Dendritic cell treated with granulocyte-macrophage colony-stimulating factor and Interleukin-4, amounts not matched to agents 40 ng/mL and 50 ng/mL, for 4 days (primary cell): ENCODE measurements at regions of chr22 and their contacts with region 1.

Region 1: DNA sequence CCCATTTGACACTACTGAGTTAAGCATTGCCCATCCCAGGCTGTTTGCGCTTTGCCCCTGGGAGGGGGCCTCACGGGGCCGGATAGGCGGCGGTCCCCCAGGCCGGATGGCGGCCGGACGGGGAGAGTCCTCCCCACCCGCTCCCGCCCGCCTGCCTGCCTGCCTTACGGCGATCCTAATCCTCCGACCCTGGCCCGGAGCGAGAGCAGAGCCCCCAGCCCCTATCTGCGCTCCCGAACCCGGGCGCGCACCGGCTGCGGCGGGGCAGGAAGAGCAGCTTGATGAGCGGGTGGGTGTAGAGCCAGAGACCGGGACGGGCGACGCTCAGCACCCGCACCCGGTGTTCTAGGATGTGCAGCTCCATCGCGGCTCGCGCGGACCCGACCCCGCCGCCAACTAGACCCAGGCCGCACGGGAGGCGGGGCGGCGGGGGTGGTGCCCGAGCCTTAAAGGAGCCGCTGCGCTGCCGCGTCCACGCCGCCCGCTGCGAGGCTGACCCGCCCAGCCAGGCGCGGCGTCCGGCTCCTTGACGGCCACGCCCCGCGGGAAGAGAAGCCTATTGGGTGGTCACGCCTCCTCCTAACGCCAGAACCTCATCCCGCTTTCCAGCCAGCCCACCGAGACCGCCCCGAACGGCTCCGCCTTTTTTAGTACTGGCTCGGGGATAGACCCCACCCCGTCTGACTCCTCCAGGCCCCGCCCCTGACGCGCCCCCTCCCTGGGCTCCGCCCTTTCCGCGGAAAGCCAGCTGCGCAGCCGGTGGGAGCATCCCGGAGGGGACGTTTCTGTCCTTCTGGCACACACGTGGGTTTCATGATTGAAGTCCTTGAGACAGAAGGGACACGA is at the start of gene CASTOR1:
- H3K4me3 Mint-ChIP-seq: peak within 1 kb of the TSS; percentile 79
- H3K27ac Mint-ChIP-seq: peak within 1 kb of the TSS; percentile 90
- H3K4me1 Mint-ChIP-seq: peaks cover 70% of the 10 kb centered on the region
- H3K27me3 Mint-ChIP-seq: peaks cover 2% of the 10 kb centered on the region

Region 2: GRCh38 chr22:30253205-30253852 is 36.0 kb before region 1 on chr22:
- intact Hi-C with region 1: loop called (anchors 5 kb)
- H3K4me3 Mint-ChIP-seq: no peak overlapping the region
- H3K27ac Mint-ChIP-seq: peak overlapping the region; percentile 24
- H3K4me1 Mint-ChIP-seq: peaks cover 48% of the 10 kb centered on the region
- H3K27me3 Mint-ChIP-seq: peaks cover 36% of the 10 kb centered on the region

Region 3: GRCh38 chr22:30305519-30305905 is 16.2 kb after region 1 on chr22:
- intact Hi-C with region 1: loop called (anchors 1 kb)
- H3K4me3 Mint-ChIP-seq: peak overlapping the region; percentile 52
- H3K27ac Mint-ChIP-seq: peak overlapping the region; percentile 85
- H3K4me1 Mint-ChIP-seq: peaks cover 100% of the 10 kb centered on the region
- H3K27me3 Mint-ChIP-seq: no peaks in the 10 kb centered on the region

Region 4: GRCh38 chr22:30318799-30319419 is 29.6 kb after region 1 on chr22:
- intact Hi-C with region 1: no loop called
- H3K4me3 Mint-ChIP-seq: no peak overlapping the region
- H3K27ac Mint-ChIP-seq: peak overlapping the region; percentile 48
- H3K4me1 Mint-ChIP-seq: peaks cover 93% of the 10 kb centered on the region
- H3K27me3 Mint-ChIP-seq: no peaks in the 10 kb centered on the region

Region 5: GRCh38 chr22:30356449-30357235 is 67.3 kb after region 1 on chr22 and contains the starts of genes CCDC157 and SF3A1:
- intact Hi-C with region 1: loop called (anchors 1 kb)
- H3K4me3 Mint-ChIP-seq: peak within 1 kb of the TSS; percentile 73
- H3K27ac Mint-ChIP-seq: peak within 1 kb of the TSS; percentile 67
- H3K4me1 Mint-ChIP-seq: peaks cover 46% of the 10 kb centered on the region
- H3K27me3 Mint-ChIP-seq: peaks cover 9% of the 10 kb centered on the region

Region 6: DNA sequence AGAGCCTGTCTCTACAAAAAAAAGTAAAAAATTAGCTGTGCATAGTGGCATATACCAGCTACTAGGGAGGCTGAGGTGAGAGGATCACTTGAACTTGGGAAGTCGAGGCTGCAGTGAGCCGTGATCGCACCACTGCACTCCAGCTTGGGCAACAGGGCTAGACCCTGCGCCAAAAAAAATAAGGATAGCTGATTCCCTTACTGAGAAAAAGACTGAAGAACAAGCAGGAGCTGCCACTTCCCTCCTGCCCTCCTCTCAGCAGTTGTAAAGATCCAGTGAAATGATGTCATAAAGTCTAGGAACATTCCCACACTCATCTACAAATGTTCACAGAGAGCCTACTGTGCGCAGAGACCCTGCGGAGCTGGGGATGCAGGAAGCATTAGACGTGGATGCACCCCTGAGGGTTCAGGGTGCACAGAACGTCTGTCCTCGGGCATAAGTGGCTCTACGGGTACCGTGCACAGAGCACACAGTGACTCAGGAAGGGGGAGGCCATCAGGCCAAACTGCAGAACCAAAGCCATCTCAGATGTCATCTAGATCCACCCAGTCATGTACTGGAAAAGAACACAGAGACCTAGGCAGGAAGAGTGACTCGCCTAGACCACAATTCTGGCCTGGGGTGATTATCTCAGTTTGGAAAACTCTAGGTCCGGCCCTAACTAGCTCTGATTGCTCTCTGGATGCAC is 119.2 kb after region 1 on chr22:
- intact Hi-C with region 1: no loop called
- H3K4me3 Mint-ChIP-seq: no peak overlapping the region
- H3K27ac Mint-ChIP-seq: no peak overlapping the region
- H3K4me1 Mint-ChIP-seq: no peaks in the 10 kb centered on the region
- H3K27me3 Mint-ChIP-seq: peaks cover 6% of the 10 kb centered on the region